ENCODE measurements at regions of chr17 and their contacts with region 1.

Region 1: DNA sequence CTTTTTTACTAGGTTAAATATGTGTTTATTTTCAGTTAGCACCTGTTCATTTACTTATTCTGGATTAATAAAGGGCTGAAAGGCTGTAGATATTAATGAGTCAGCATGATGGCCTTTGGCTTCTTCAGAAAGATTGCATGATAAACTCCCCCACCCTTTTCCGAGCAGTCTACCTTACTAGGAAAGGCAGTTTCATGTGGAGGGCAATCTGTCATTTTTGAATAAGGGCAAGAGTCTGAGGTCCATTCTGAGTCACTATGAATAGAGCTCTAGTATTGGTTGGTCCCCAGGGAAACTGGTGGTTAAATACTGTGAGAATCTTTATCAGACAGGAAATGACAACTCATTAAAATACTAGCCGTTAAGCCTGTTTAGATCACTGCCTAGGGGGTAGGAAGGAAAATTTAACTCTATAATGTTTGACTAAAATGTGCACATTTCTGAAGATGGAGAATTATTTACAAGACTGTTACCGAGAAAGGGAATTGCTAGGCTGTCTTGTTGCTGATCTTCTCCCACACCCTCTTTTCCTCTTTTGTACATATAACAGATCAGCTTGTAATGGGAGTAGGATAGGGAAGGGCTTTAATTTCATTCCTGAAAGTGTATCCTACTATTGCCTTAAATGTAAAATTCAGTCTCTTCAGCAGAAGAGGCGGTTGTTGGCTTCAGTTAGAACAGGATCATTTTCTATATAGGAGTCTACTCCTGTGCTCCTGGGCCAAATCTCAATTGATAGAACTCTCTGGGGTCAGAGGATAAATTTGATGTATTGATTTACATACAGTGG is 63.3 kb downstream of the TUBD1 start:
- DNase-seq: peak; percentile 72
- ATAC-seq: peak; percentile 78
- H3K4me3 Mint-ChIP-seq: peak overlapping the region; percentile 89
- H3K27ac Mint-ChIP-seq: peak overlapping the region; percentile 97
- H3K4me1 Mint-ChIP-seq: peaks cover 73% of the 10 kb centered on the region
- H3K27me3 Mint-ChIP-seq: no peaks in the 10 kb centered on the region
- CTCF ChIP-seq: no peak

Region 2: DNA sequence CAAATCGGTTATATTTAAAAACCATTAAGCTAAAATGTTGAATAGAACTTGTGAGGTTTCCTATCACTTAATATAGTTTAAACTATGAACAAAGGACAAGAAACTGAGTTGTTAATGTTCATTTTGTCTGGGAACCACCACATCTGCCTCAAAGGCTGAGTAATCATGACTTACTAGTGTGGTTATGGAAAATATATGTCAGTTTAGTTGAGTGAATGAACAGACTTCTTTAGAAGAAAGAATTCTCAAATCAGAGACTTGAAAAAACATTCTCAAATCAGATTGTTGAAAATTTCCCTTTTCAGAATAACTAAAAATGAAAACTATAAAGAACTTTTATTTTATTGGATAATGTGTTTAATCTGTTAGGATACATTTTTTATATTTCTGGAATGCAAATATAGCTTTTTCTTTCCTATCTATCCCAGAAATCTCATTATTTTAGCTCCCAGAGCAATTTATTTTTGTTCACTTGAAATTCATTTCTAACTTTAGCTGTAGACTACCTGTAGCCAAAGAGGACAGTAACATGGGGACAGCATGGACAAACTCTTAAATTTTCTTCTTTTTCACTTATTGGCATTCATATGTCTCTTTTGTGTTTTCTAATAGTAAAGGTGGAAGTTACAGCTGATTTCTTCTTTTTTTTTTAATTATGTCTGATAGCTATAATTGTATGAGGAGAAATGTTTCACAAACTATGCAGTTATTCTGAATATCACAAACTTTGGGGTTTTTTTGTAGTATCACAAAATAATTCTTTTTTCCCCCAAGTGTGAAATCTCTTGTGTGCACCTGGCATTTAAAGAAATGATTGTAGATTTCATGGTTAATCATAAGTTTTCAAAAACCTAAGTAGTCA is 66.7 kb before region 1 on chr17:
- CTCF ChIA-PET with region 1: interaction called, 3 read pairs
- POLR2A ChIA-PET with region 1: interaction called, 420 read pairs
- intact Hi-C with region 1: loop called (anchors 1 kb)
- DNase-seq: peak; percentile 47
- ATAC-seq: peak; percentile 71
- H3K4me3 Mint-ChIP-seq: peak overlapping the region; percentile 48
- H3K27ac Mint-ChIP-seq: peak overlapping the region; percentile 93
- H3K4me1 Mint-ChIP-seq: peaks cover 66% of the 10 kb centered on the region
- H3K27me3 Mint-ChIP-seq: no peaks in the 10 kb centered on the region
- CTCF ChIP-seq: no peak

Region 3: GRCh38 chr17:59786536-59787319 is 42.7 kb before region 1 on chr17:
- CTCF ChIA-PET with region 1: interaction called, 8 read pairs
- POLR2A ChIA-PET with region 1: interaction called, 1,156 read pairs
- intact Hi-C with region 1: loop called (anchors 1 kb)
- DNase-seq: peak; percentile 92
- ATAC-seq: peak; percentile 86
- H3K4me3 Mint-ChIP-seq: peak overlapping the region; percentile 72
- H3K27ac Mint-ChIP-seq: peak overlapping the region; percentile 99
- H3K4me1 Mint-ChIP-seq: peaks cover 58% of the 10 kb centered on the region
- H3K27me3 Mint-ChIP-seq: no peaks in the 10 kb centered on the region
- CTCF ChIP-seq: no peak

Region 4: GRCh38 chr17:59846394-59847165 is 17.2 kb after region 1 on chr17:
- CTCF ChIA-PET with region 1: interaction called, 4 read pairs
- POLR2A ChIA-PET with region 1: interaction called, 711 read pairs
- intact Hi-C with region 1: loop called (anchors 1 kb)
- DNase-seq: peak; percentile 40
- ATAC-seq: peak; percentile 45
- H3K4me3 Mint-ChIP-seq: peak overlapping the region; percentile 18
- H3K27ac Mint-ChIP-seq: peak overlapping the region; percentile 80
- H3K4me1 Mint-ChIP-seq: peaks cover 59% of the 10 kb centered on the region
- H3K27me3 Mint-ChIP-seq: no peaks in the 10 kb centered on the region
- CTCF ChIP-seq: no peak

Region 5: GRCh38 chr17:59859444-59860025 is 30.1 kb after region 1 on chr17:
- CTCF ChIA-PET with region 1: interaction called, 10 read pairs
- POLR2A ChIA-PET with region 1: interaction called, 4 read pairs
- intact Hi-C with region 1: no loop called
- DNase-seq: no peak
- ATAC-seq: peak; percentile 66
- H3K4me3 Mint-ChIP-seq: no peak overlapping the region
- H3K27ac Mint-ChIP-seq: peak overlapping the region; percentile 59
- H3K4me1 Mint-ChIP-seq: peaks cover 21% of the 10 kb centered on the region
- H3K27me3 Mint-ChIP-seq: no peaks in the 10 kb centered on the region
- CTCF ChIP-seq: peak; percentile 76

Measured in activated CD8-positive, alpha-beta T cell treated with anti-CD3 and anti-CD28 coated beads for 36 hours (primary cell).